Right ventricle myocardium superior (tissue), 1 donor: ENCODE measurements at regions of chr14 and their contacts with region 1.

Region 1: DNA sequence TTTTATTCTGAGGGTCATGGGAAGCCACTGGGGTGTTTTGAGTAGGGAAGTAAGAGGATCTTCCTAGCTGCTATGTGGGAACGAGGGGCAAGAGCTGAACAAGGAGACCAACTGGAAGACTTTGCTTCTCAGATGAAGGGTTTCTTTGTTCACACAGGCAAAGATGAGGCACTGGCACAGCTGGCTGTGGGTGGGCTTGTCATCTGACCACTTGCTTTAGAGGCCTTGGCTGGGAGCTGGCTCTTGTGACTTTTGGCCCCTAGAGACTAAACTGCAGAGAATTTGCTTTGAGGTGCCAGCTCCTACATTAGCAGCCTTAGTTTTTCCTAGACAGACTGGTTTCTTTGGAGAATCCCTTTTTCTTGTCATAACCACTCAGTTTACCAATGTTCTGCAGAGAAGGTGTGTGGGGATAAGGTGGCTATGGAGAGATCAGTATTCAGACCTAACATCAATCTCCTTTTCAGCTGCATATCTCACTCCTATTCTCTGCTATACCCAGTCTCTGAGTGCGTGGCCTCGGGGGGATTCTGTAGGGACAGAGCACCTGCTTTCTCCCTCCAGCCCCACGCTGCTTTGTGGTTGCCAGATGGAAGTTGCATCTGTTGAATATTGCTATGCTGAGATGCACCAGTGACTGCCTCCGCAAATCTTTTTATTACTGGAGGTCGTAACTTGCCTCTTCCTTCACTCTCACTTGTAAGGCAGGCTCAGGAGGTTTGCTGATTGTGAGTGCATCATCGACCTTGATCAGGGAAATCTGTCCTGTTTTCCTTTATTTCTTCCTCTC is 12.7 kb downstream of the PPP2R5C start:
- DNase-seq: no peak
- ATAC-seq: no peak

Region 2: DNA sequence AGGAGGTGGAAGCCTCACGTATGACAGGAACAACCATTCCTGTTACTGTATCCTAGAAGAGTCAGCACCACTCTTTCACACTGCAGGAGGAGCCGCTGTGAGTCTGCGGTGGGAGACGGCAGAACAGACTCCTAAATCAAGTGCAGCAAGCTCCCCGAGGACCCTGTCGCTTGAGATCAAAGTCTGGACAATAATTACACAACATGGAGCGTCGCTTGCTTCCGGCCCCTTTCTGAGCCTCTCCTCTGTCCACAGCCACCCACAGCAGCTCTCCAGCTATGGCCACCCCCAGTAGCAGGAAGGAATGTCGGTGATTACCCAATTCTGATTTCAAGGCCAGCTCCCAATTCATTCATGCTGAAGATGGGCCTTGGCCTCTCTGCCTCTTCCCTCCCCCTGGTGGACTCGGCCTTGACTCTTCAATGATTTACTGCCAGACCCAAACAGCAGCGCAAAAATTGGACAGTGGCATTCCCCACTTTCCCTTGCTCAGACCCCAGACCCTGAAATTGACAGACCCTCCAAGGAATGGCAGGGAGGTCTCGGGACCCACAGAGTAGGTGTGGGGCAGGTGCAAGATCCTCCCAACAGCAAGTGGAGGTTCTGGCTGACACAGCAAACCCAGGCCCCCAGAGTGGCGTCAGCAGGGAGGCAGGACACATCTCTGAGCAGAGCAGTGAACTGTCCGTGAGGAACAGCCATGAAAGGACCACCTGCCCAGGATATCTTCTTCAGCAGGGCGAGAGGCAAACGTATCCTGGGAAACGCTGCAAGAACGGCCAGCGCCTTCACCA is 485.6 kb before region 1 on chr14:
- intact Hi-C with region 1: no loop called
- DNase-seq: no peak
- ATAC-seq: peak; percentile 12

Region 3: DNA sequence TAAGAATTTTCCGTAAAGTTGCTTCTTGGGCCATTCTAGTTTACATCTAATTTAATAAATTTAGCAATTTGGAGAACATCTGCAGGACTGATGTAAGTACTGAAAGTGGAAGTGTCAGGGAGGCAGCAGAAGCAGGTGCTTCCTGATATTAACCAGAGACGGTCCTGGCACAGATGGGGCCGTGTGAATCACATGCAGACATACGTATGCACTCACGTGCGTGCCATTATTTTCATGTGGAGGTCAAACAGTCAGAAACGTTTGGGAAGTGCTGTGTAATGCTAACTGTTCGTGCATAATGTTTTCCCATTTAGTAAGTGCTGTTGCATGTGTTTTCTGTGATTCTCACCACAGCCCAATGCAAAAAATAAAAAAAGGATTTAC is 102.3 kb after region 1 on chr14:
- intact Hi-C with region 1: loop called (anchors 10 kb)
- DNase-seq: peak; percentile 88
- ATAC-seq: peak; percentile 83

Region 4: GRCh38 chr14:101964297-101965144 is 190.3 kb after region 1 on chr14 and contains the start of gene DYNC1H1:
- intact Hi-C with region 1: loop called (anchors 5 kb)
- DNase-seq: peak; percentile 98
- ATAC-seq: peak; percentile 93
- total RNA-seq, gene DYNC1H1: 384 TPM